ENCODE measurements at regions of chr19 and their contacts with region 1.

Region 1: DNA sequence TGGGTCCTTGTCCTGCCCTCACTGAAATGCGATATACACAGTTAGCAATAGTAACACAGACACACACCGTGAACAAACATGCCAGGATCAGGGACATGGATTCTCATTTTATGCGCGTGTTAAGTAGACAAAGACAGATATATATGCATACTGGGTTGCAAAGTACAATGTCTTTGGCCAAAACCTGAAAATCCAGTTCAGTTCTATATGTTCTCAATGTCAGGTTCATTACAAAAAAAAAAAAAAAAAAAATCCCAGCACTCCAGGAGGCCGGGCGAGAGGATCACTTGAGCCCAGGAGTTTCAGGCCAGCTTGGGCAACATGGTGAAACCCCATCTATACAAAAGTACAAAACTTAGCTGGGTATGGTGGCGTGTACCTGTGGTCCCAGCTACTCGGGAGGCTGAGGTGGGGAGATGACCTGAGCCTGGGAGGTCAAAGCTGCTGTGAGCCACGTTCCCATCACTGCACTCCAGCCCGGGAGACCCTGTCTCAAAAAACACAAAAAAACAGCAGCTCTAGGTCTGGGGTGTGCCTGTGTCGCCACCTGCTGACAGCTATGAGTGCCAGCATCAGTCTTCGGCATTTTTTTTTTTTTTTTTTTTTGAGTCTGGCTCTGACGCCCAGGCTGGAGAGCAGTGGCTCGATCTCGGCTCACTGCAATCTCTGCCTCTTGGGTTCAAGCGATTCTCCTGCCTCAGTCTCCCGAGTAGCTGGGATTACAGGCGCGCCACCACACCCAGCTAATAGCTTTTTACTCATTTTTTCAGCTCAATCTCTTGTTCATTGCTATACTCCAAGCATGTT is 10.3 kb downstream of the AP2S1 start:
- DNase-seq: peak; percentile 81
- H3K4me3 ChIP-seq: no peak overlapping the region
- H3K27ac ChIP-seq: no peak overlapping the region
- H3K4me1 ChIP-seq: no peaks in the 10 kb centered on the region
- CTCF ChIP-seq: peak; percentile 87

Region 2: GRCh38 chr19:46736544-46737297 is 103.6 kb before region 1 on chr19:
- CTCF ChIA-PET with region 1: no interaction called
- POLR2A ChIA-PET with region 1: no interaction called
- intact Hi-C with region 1: no loop called
- DNase-seq: no peak
- H3K4me3 ChIP-seq: no peak overlapping the region
- H3K27ac ChIP-seq: no peak overlapping the region
- H3K4me1 ChIP-seq: no peaks in the 10 kb centered on the region
- CTCF ChIP-seq: no peak

Region 3: GRCh38 chr19:46753420-46754155 is 86.8 kb before region 1 on chr19:
- CTCF ChIA-PET with region 1: interaction called, 3 read pairs
- POLR2A ChIA-PET with region 1: no interaction called
- intact Hi-C with region 1: loop called (anchors 1 kb)
- DNase-seq: peak; percentile 81
- H3K4me3 ChIP-seq: no peak overlapping the region
- H3K27ac ChIP-seq: no peak overlapping the region
- H3K4me1 ChIP-seq: peaks cover 24% of the 10 kb centered on the region
- CTCF ChIP-seq: peak; percentile 87

Region 4: GRCh38 chr19:46850228-46851203 is 10.2 kb after region 1 on chr19 and contains the start of gene AP2S1:
- CTCF ChIA-PET with region 1: no interaction called
- POLR2A ChIA-PET with region 1: no interaction called
- intact Hi-C with region 1: no loop called
- DNase-seq: peak; percentile 98
- H3K4me3 ChIP-seq: peak within 1 kb of the TSS; percentile 90
- H3K27ac ChIP-seq: peak within 1 kb of the TSS; percentile 5
- H3K4me1 ChIP-seq: peaks cover 16% of the 10 kb centered on the region
- CTCF ChIP-seq: no peak
- total RNA-seq, gene AP2S1: 105 and 110 TPM in 2 replicates

Region 5: DNA sequence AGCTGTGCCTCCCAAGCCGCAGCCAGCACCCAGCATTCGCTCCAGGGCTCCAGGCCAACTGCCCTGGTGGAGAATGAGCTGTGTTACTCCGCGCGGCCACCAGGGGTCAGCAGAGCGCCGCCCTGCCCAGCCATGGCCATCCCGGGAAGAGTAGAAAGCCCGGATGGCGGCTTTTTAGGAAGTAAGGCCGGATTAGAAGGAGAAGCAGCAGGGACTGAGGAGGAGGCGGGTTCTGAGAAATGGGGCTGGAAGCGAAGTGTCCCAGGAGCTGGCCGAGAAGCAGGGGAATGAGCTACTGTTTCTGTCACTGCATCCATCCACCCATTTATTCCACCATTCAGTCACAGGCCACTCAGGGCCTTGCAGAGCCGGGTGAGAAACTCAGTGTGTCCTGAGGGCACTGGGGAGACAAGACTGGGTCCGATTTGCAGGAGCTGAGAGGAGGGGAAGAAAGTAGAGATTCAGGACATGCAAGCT is 172.7 kb after region 1 on chr19:
- CTCF ChIA-PET with region 1: no interaction called
- POLR2A ChIA-PET with region 1: no interaction called
- intact Hi-C with region 1: no loop called
- DNase-seq: peak; percentile 43
- H3K4me3 ChIP-seq: no peak overlapping the region
- H3K27ac ChIP-seq: no peak overlapping the region
- H3K4me1 ChIP-seq: peaks cover 3% of the 10 kb centered on the region
- CTCF ChIP-seq: peak; percentile 98

Measured in OCI-LY7 (cell line).